ENCODE measurements at regions of chr2 and their contacts with region 1.

Region 1: DNA sequence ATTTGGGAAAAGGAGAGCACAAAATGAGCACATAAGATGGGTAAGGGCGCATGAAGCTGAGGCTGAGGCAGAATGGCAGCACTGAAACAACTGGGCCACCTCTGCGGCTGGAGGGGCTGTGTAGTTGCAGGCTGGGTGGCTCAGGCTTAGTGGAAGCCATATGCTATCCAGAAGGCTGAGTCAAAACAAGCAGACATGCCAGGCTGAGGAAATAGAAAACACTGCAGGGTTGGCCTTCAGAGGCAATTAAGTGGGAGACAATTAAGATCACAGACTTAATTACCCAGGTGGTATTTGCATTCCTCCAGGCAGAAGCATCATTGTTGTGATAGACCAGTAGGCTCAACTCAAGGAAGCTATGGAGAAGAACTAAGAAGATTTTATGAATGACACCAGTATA is 11.4 kb upstream of the XPO1 start:
- DNase-seq: no peak
- ATAC-seq: no peak
- H3K4me3 ChIP-seq: no peak overlapping the region
- H3K4me3 Mint-ChIP-seq: no peak overlapping the region
- H3K27ac ChIP-seq: no peak overlapping the region
- H3K27ac Mint-ChIP-seq: no peak overlapping the region
- H3K4me1 ChIP-seq: no peaks in the 10 kb centered on the region
- H3K4me1 Mint-ChIP-seq: no peaks in the 10 kb centered on the region
- H3K27me3 ChIP-seq: peaks cover 0 to 3% of the 10 kb centered on the region in 2 experiments
- H3K27me3 Mint-ChIP-seq: no peaks in the 10 kb centered on the region

Region 2: DNA sequence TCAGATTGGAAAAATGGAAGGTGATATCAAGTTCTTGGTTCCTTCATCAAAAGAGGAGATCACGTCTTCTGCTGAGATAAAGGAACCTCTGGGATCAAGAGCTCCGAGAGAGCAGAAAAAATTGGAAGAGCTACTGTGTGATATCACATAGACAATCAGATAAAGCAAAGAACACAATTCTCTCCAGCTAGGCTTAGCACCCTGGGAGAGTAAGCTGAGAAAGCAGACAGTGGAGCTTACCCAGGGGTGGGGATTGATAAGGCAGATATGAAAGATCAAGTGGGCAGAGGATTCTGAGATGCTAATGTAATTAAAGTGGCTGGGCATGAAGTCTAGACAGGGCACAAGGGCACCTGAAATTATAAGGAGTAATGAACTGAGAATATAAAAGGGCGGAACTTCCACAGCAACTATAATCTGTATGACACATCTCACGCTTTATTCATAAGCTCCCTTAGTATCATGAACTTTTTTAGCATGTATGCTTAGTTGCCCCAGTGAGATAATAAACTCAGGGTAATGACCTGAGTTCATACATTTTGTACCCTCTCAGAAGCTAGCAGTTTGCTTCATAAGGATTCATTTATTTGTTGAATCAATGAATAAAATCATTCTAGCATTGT is 238.5 kb after region 1 on chr2:
- CTCF ChIA-PET with region 1: interaction called in 1 of 2 experiments, 10 read pairs
- POLR2A ChIA-PET with region 1: no interaction called
- DNase-seq: no peak
- ATAC-seq: no peak
- H3K4me3 ChIP-seq: no peak overlapping the region
- H3K4me3 Mint-ChIP-seq: no peak overlapping the region
- H3K27ac ChIP-seq: no peak overlapping the region
- H3K27ac Mint-ChIP-seq: no peak overlapping the region
- H3K4me1 ChIP-seq: no peaks in the 10 kb centered on the region
- H3K4me1 Mint-ChIP-seq: no peaks in the 10 kb centered on the region
- H3K27me3 ChIP-seq: peaks cover 0 to 5% of the 10 kb centered on the region in 2 experiments
- H3K27me3 Mint-ChIP-seq: peaks cover 7 to 8% of the 10 kb centered on the region in 2 donors

Region 3: GRCh38 chr2:62939735-62940491 is 1390.4 kb after region 1 on chr2:
- CTCF ChIA-PET with region 1: no interaction called
- POLR2A ChIA-PET with region 1: no interaction called
- DNase-seq: no peak
- ATAC-seq: no peak
- H3K4me3 ChIP-seq: no peak overlapping the region
- H3K4me3 Mint-ChIP-seq: no peak overlapping the region
- H3K27ac ChIP-seq: no peak overlapping the region
- H3K27ac Mint-ChIP-seq: no peak overlapping the region
- H3K4me1 ChIP-seq: no peaks in the 10 kb centered on the region
- H3K4me1 Mint-ChIP-seq: no peaks in the 10 kb centered on the region
- H3K27me3 ChIP-seq: no peaks in the 10 kb centered on the region
- H3K27me3 Mint-ChIP-seq: no peaks in the 10 kb centered on the region